Pancreas (tissue), 10 donors: ENCODE measurements at regions of chr17 and their contacts with region 1.

Region 1: GRCh38 chr17:73311781-73312641 is at the start of gene CDC42EP4:
- DNase-seq: peak; percentile 96 to 98 (median 98)
- ATAC-seq: peak; percentile 69 to 83 (median 74)
- H3K4me3 ChIP-seq: peak within 1 kb of the TSS; percentile 83 to 100 (median 92)
- H3K27ac ChIP-seq: peak within 1 kb of the TSS; percentile 92 to 99 (median 96)
- H3K4me1 ChIP-seq: peaks cover 8 to 20% (median 12%) of the 10 kb centered on the region in 3 donors
- H3K27me3 ChIP-seq: no peaks in the 10 kb centered on the region
- CTCF ChIP-seq: no peak
- total RNA-seq, gene CDC42EP4: 43.2 to 56.2 (median 46.9) TPM

Region 2: GRCh38 chr17:73359987-73360410 is 48.0 kb after region 1 on chr17:
- intact Hi-C with region 1: loop called in 1 of 3 experiments (anchors 10 kb)
- DNase-seq: peak; percentile 80 to 94 (median 86)
- ATAC-seq: peak; percentile 81 to 92 (median 89)
- H3K4me3 ChIP-seq: no peak overlapping the region
- H3K27ac ChIP-seq: peak overlapping the region; percentile 16 to 67 (median 42)
- H3K4me1 ChIP-seq: peaks cover 0 to 9% (median 0%) of the 10 kb centered on the region in 3 donors
- H3K27me3 ChIP-seq: no peaks in the 10 kb centered on the region
- CTCF ChIP-seq: peak in 1 of 4 donors; percentile 11